H1 (cell line): ENCODE measurements at regions of chr3 and their contacts with region 1.

Region 1: DNA sequence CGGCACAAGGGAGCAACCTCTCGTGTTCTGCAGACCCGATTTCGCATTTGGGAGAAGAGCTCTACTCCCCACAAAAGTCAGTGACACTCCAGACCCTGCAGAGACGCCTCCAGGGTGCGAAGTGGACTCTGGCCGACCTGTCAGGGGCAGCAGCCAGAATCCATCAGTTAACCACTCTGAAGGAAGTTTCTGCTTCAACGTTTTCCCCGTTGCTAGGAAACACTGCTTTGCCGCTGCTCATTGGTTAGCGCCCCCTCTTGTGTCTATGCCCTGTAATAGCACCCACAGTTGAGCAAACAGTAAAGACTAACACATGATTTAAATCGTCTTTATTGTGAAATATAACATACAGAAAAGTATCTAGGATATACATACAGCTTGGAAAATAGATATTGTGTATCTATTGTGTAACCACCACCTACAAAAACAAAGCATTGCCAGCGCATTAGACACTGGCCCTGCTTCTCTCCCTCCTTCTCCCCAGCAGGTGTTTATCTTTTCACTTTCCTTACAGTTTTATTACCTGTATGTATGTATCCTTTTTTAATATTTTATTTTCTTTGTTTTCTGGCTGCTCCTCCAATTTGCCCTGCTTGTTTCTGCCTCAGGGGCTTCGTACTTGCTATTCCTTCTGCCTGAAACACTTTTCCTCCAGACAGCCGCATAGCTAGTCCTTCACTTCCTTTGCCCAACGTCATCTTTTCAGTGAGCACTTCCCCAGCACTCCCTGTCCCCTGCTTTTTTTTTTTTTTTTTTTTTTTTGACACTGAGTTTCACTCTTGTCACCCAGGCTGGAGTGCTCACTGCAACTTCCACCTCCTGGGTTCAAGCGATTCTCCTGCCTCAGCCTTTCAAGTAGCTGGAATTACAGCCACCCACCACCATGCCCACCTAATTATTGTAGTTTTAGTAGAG is 38.8 kb downstream of the TMEM40 start:
- DNase-seq: peak; percentile 27 to 76
- H3K4me3 ChIP-seq: no peak overlapping the region
- H3K27ac ChIP-seq: no peak overlapping the region
- H3K4me1 ChIP-seq: no peaks in the 10 kb centered on the region
- H3K27me3 ChIP-seq: no peaks in the 10 kb centered on the region; a peak in 1 of 7 replicates
- CTCF ChIP-seq: peak; percentile 66 to 98 (median 84)
- EP300 ChIP-seq: no peak
- POLR2A ChIP-seq: no peak
- RAD21 ChIP-seq: peak; percentile 76 to 83

Region 2: DNA sequence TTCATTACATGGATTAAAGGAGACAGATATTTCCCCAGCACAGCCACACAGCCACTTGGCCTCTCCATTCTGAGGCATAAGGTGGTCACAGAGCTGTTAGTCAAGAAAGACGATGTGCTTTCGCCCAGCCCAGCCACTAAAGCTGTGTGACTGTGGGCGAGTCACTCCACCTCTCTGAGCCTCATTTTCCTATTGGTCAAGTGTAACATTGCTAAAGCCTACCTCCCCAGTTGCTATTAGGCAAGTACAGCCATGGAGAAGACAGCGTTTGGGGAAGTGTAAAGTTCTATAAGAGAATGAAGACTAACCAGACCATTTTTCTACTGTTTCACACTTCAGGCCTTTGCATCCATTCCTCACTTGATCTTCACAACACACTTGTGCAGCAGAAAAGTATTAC is 14.7 kb after region 1 on chr3:
- CTCF ChIA-PET with region 1: interaction called, 12 read pairs
- POLR2A ChIA-PET with region 1: no interaction called
- DNase-seq: no peak
- H3K4me3 ChIP-seq: no peak overlapping the region
- H3K27ac ChIP-seq: no peak overlapping the region
- H3K4me1 ChIP-seq: no peaks in the 10 kb centered on the region
- H3K27me3 ChIP-seq: no peaks in the 10 kb centered on the region
- CTCF ChIP-seq: no peak
- EP300 ChIP-seq: no peak
- POLR2A ChIP-seq: no peak
- RAD21 ChIP-seq: no peak

Region 3: GRCh38 chr3:12752809-12753208 is 32.6 kb after region 1 on chr3:
- CTCF ChIA-PET with region 1: interaction called, 10 read pairs
- POLR2A ChIA-PET with region 1: no interaction called
- DNase-seq: no peak
- H3K4me3 ChIP-seq: no peak overlapping the region
- H3K27ac ChIP-seq: no peak overlapping the region
- H3K4me1 ChIP-seq: 0 out of 7 replicates have a peak, but pooled peaks cover 0 to 2% (median 0%) of the 10 kb centered on the region in 4 experiments
- H3K27me3 ChIP-seq: no peaks in the 10 kb centered on the region
- CTCF ChIP-seq: no peak
- EP300 ChIP-seq: no peak
- POLR2A ChIP-seq: no peak
- RAD21 ChIP-seq: no peak

Region 4: DNA sequence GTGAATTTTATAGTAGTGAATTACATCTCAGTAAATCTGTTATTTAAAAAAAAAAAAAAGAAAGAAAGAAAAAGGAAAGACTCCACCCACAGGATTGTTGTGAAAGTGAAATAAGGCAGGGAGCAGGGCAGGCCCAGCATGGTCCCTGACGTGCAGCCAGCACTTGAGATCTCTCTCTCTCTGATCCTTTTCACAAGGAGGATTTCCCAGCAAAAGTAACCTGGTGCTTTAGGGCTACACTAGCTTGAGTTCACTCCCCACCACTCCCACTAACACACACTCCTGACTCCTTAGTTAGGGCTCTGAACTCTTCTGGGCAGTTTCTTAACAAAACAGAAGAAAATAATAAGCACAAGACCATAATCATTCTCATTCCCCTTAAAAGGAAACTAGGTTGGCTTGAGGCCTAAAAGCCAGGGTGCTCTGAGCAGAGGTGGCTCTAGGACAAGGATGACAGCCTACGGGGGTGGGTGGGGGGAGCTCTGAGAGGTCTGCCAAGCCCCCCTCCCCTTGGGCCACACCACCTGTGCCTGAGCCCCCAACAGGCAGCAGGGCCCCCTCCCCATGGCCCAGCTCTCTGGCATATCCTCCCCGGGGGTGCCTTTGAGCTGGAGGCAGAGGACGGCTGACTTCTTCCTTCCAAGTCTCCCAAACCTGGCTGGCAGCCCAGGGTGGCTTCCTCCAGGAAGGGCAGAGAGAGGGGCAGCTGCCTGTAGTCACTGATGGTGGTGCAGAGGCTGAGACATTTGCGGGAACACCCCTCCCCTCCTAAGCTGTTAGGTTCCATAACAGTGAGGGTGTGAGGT is 38.0 kb after region 1 on chr3:
- CTCF ChIA-PET with region 1: interaction called, 10 read pairs
- POLR2A ChIA-PET with region 1: no interaction called
- DNase-seq: no peak
- H3K4me3 ChIP-seq: no peak overlapping the region
- H3K27ac ChIP-seq: no peak overlapping the region
- H3K4me1 ChIP-seq: peaks cover 0 to 13% (median 8%) of the 10 kb centered on the region in 4 experiments; a peak in 5 of 7 replicates
- H3K27me3 ChIP-seq: no peaks in the 10 kb centered on the region
- CTCF ChIP-seq: no peak
- EP300 ChIP-seq: no peak
- POLR2A ChIP-seq: no peak
- RAD21 ChIP-seq: no peak